ENCODE measurements at regions of chr2 and their contacts with region 1.

Region 1: DNA sequence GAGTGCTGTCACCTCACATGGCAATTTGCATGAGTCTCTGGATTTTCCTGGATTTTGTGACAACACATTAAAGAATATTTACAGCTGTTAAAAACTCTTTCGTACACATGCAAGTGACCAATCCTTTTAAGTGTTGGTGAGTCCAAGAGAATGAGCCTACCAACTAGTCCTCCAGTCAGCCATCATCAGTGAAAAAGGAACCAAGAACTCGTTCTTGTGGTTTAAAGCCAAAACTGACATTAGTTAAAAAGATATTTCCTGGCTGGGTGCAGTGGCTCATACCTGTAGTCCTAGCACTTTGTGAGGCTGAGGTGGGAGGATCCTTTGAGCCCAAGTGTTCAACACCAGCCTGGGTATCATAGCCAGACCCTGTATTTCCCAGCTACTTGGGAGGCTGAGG is 215.4 kb upstream of the ITGA4 start:
- DNase-seq: no peak
- ATAC-seq: peak; percentile 67
- H3K4me3 Mint-ChIP-seq: no peak overlapping the region
- H3K27ac Mint-ChIP-seq: peak overlapping the region; percentile 51
- H3K4me1 Mint-ChIP-seq: peaks cover 41% of the 10 kb centered on the region
- H3K27me3 Mint-ChIP-seq: no peaks in the 10 kb centered on the region

Region 2: GRCh38 chr2:181218401-181218821 is 23.4 kb before region 1 on chr2:
- CTCF ChIA-PET with region 1: no interaction called
- POLR2A ChIA-PET with region 1: no interaction called
- DNase-seq: no peak
- ATAC-seq: no peak
- H3K4me3 Mint-ChIP-seq: no peak overlapping the region
- H3K27ac Mint-ChIP-seq: no peak overlapping the region
- H3K4me1 Mint-ChIP-seq: peaks cover 12% of the 10 kb centered on the region
- H3K27me3 Mint-ChIP-seq: no peaks in the 10 kb centered on the region

Region 3: DNA sequence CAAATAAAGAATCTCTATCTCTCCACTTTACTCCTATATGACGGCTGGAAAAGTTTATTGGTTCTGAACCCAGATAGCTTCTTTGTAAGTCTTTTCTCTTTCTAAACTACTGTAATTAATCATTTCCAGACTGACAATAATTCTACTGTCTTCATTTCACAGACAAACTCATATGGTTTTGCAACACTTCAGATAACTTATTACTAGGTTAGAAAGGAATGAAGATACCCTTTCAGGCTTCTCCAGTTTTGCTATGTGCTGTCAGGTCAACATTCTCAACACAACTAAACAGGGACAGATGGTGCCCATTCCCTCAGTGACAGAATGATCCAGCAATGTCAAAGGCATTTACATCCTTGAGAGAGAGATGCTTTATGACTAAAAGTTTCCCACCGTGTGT is 16.9 kb after region 1 on chr2:
- CTCF ChIA-PET with region 1: interaction called, 13 read pairs
- POLR2A ChIA-PET with region 1: no interaction called
- DNase-seq: no peak
- ATAC-seq: no peak
- H3K4me3 Mint-ChIP-seq: no peak overlapping the region
- H3K27ac Mint-ChIP-seq: no peak overlapping the region
- H3K4me1 Mint-ChIP-seq: no peaks in the 10 kb centered on the region
- H3K27me3 Mint-ChIP-seq: no peaks in the 10 kb centered on the region

Region 4: DNA sequence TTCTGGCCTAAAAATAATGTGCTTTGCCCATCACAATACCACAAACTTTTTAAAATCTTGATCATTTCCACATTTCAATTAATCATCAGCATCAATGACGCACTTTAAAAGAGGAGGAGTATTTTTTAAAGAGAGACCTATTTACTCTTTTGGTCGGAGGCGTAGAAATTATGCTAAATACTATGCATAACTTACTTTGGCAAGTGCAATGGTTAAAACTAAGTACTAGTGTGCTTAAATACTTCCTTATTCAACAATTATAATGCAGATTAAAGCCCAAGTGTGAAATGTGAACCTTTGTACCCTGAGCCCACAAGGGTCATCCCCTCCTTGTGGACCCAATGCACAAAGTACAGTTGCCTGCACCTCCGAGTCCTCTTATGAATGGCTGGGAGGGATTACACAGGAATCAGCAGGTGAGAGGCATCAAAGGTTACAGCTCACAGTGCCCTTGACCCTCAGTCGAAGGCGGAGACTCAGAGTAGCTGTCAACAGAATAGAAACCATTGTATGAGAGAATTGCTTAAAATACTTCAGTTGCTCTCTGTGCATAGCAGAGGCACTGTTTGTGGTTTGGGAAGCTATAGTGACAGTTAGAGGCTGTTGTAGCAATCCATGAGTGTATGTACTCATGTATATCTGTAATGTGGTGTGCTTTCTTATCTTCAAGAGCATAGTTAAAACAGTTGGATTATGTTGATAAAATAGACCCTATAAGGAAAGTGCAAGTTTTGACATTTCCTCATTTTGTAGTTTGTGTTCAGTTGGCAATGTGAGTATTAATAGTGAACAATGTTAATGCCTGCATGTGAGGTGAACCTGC is 63.7 kb after region 1 on chr2:
- CTCF ChIA-PET with region 1: no interaction called
- POLR2A ChIA-PET with region 1: no interaction called
- DNase-seq: peak; percentile 80
- ATAC-seq: peak; percentile 78
- H3K4me3 Mint-ChIP-seq: peak overlapping the region; percentile 76
- H3K27ac Mint-ChIP-seq: peak overlapping the region; percentile 93
- H3K4me1 Mint-ChIP-seq: peaks cover 67% of the 10 kb centered on the region
- H3K27me3 Mint-ChIP-seq: no peaks in the 10 kb centered on the region

Measured in activated CD8-positive, alpha-beta T cell treated with anti-CD3 and anti-CD28 coated beads, Interleukin-2, amount 10 ng/mL, durations not matched to agents 7 days and 5 days (primary cell).